ENCODE measurements at regions of chr1 and their contacts with region 1.

Region 1: GRCh38 chr1:229070168-229070567 is 200.7 kb upstream of the RAB4A start:
- DNase-seq: peak; percentile 60 to 70
- H3K4me3 ChIP-seq: no peak overlapping the region
- H3K27ac ChIP-seq: peak overlapping the region in 1 of 2 donors; percentile 9
- H3K4me1 ChIP-seq: no peaks in the 10 kb centered on the region
- H3K27me3 ChIP-seq: no peaks in the 10 kb centered on the region
- CTCF ChIP-seq: no peak
- POLR2A ChIP-seq: no peak

Region 2: GRCh38 chr1:228765168-228765946 is 304.8 kb before region 1 on chr1:
- intact Hi-C with region 1: no loop called
- DNase-seq: no peak
- H3K4me3 ChIP-seq: no peak overlapping the region
- H3K27ac ChIP-seq: no peak overlapping the region
- H3K4me1 ChIP-seq: no peaks in the 10 kb centered on the region
- H3K27me3 ChIP-seq: no peaks in the 10 kb centered on the region
- CTCF ChIP-seq: no peak
- POLR2A ChIP-seq: no peak

Region 3: DNA sequence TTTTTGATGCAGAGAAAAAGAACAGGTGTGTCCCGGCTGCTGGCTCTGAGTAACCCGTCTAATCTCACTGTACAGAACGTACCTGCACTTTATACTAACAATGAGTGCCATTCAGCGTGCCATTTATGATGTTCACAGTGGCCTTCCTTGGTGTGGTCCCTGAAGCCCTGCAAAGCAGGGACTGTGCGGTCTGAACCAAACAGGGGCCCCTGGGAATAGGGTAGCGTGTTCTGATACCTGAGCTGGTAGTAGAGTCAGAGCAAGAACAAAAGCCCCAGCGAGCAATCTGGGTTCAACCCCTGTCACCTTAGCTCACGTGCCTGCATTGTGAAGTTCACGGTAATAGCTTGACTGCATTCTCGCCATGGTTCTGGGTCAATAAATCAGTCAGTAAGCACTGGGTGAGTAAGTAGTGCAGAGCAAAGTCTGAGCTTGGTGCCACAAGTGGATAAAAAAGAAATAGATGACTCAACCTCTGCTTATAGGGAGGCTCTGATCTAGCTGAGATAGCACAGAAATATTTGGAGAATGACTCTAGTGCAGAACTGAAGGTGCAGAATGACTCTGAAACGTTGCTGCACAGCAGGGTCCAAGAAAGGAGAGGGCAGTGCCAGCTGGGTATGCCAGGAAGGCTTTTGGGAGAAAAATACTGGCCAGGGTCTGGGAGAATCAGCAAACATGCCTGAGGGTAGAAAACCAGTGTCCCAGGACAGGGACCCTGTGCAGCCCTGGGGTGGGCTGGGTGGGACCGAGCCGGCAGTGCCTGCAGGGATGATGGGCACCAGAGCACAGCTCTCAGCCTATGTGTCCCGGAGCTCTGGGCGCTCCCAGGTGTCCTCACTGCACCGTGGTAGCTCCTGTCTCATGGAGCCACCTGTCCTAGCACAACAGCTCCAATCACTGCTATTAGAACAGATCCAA is 209.0 kb before region 1 on chr1:
- intact Hi-C with region 1: no loop called
- DNase-seq: no peak
- H3K4me3 ChIP-seq: no peak overlapping the region
- H3K27ac ChIP-seq: no peak overlapping the region
- H3K4me1 ChIP-seq: peaks cover 0 to 5% of the 10 kb centered on the region in 2 donors
- H3K27me3 ChIP-seq: no peaks in the 10 kb centered on the region
- CTCF ChIP-seq: no peak
- POLR2A ChIP-seq: no peak

Region 4: DNA sequence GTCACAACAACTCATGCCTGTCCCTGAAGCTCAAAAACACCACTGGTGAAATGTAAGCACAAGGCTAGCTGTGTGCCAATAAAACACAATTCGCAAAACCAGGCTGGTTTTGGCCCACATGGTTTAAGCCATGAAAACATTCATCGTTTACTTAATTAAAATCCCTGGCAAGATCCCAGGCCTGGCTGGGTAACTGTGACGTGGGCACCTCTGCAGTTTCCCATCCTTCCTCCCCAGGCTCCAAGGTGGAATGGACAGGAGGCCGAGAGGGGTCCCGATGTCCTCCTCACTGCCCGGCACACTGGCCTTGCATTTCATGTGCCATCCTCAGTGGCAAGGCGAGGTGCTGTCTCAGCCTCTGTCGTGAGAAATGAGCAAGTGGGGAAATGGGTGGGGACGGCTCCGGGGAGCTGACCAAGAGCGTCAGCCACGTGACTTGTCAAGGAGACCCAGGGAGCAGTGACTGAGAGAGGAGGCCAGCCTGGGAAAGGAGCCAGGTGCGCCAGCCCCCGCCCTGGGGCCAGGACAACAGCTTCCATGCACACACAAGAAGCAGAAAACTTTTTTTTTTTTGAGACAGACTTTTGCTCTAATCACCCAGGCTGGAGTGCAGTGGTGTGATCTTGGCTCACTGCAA is 47.6 kb after region 1 on chr1:
- intact Hi-C with region 1: loop called (anchors 5 kb)
- DNase-seq: peak; percentile 62 to 73
- H3K4me3 ChIP-seq: peak overlapping the region in 1 of 3 donors; percentile 17
- H3K27ac ChIP-seq: peak overlapping the region; percentile 84
- H3K4me1 ChIP-seq: peaks cover 0 to 11% of the 10 kb centered on the region in 2 donors
- H3K27me3 ChIP-seq: no peaks in the 10 kb centered on the region
- CTCF ChIP-seq: no peak
- POLR2A ChIP-seq: no peak

Region 5: DNA sequence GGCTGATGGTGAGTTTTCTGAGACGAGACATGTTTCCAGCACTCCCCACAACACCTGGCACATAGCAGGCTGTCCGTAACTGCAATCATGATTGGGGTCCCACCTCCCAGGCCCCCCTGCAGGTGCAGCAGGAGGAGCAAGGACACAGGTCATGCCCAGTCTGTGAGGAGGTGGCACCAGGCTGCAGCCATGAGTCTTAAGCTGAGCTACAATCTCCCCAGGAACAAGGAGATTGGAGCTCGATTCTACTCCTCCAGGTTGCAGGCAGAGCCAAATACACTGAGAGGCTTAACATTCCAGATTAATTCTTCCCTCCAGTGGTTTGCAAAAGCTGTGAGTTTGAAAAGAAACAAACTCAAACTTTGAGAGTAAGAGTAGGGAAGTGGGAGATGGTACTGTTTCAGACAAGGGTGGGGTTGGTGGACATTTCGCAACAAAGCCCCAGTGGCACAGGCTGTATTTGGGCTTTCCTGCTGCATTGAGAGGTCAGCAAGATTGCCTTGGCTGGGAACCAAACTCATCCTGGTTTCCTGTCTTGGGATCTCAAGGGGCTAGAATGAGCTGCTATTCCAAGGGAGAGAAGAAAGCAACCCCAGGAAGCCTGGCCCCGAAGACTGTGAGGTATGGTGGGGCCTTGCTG is 932.1 kb after region 1 on chr1:
- intact Hi-C with region 1: loop called (anchors 10 kb)
- DNase-seq: no peak
- H3K4me3 ChIP-seq: peak overlapping the region in 1 of 3 donors; percentile 1
- H3K27ac ChIP-seq: no peak overlapping the region
- H3K4me1 ChIP-seq: no peaks in the 10 kb centered on the region
- H3K27me3 ChIP-seq: no peaks in the 10 kb centered on the region
- CTCF ChIP-seq: no peak
- POLR2A ChIP-seq: no peak